ENCODE measurements at regions of chr6 and their contacts with region 1.

Region 1: DNA sequence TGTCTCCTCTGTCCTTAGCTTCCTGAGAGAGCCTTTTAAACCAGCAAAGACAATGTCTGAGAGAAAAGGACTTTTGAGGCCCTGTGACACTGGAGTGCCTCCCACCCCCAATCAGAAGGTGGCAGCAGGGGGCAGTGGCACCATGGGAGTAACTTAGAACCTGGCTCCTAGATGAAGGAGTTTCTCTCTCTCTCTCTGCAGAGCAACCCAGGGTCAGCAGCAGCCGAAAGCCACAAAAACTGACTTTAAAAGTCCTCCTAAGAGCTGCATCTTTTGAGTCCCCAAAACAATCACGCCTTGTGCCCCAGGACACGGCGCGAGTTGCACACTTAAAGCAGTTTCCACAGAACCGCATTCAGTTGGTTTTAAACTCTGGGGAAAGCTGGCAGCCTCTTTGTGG is 5.3 kb upstream of the TCP11 start:
- DNase-seq: no peak
- ATAC-seq: peak; percentile 86
- H3K4me3 ChIP-seq: no peak overlapping the region
- H3K27ac ChIP-seq: no peak overlapping the region
- H3K4me1 ChIP-seq: peaks cover 6% of the 10 kb centered on the region
- H3K27me3 ChIP-seq: no peaks in the 10 kb centered on the region
- CTCF ChIP-seq: peak; percentile 43 to 73 (median 62); a peak in 5 of 6 replicates
- EP300 ChIP-seq: no peak
- POLR2A ChIP-seq: no peak
- RAD21 ChIP-seq: peak; percentile 71

Region 2: GRCh38 chr6:35064757-35065440 is 81.6 kb before region 1 on chr6:
- CTCF ChIA-PET with region 1: no interaction called
- POLR2A ChIA-PET with region 1: no interaction called
- RAD21 ChIA-PET with region 1: no interaction called
- SMC1A ChIA-PET with region 1: no interaction called
- in situ Hi-C with region 1: no loop called
- intact Hi-C with region 1: no loop called
- DNase-seq: no peak
- ATAC-seq: no peak
- H3K4me3 ChIP-seq: no peak overlapping the region
- H3K27ac ChIP-seq: no peak overlapping the region
- H3K4me1 ChIP-seq: no peaks in the 10 kb centered on the region
- H3K27me3 ChIP-seq: no peaks in the 10 kb centered on the region
- CTCF ChIP-seq: no peak
- EP300 ChIP-seq: no peak
- POLR2A ChIP-seq: no peak
- RAD21 ChIP-seq: no peak

Region 3: GRCh38 chr6:35181308-35181932 is 35.0 kb after region 1 on chr6:
- CTCF ChIA-PET with region 1: interaction called, 5 read pairs
- POLR2A ChIA-PET with region 1: no interaction called
- RAD21 ChIA-PET with region 1: interaction called, 4 read pairs
- SMC1A ChIA-PET with region 1: interaction called, 7 read pairs
- in situ Hi-C with region 1: no loop called
- intact Hi-C with region 1: loop called (anchors 2 kb)
- DNase-seq: no peak
- ATAC-seq: no peak
- H3K4me3 ChIP-seq: no peak overlapping the region
- H3K27ac ChIP-seq: no peak overlapping the region
- H3K4me1 ChIP-seq: peaks cover 14% of the 10 kb centered on the region
- H3K27me3 ChIP-seq: no peaks in the 10 kb centered on the region
- CTCF ChIP-seq: no peak
- EP300 ChIP-seq: no peak
- POLR2A ChIP-seq: no peak
- RAD21 ChIP-seq: no peak

Region 4: GRCh38 chr6:35742797-35743196 is 596.3 kb after region 1 on chr6:
- CTCF ChIA-PET with region 1: no interaction called
- POLR2A ChIA-PET with region 1: no interaction called
- RAD21 ChIA-PET with region 1: no interaction called
- SMC1A ChIA-PET with region 1: no interaction called
- in situ Hi-C with region 1: no loop called
- intact Hi-C with region 1: no loop called
- DNase-seq: no peak
- ATAC-seq: no peak
- H3K4me3 ChIP-seq: no peak overlapping the region
- H3K27ac ChIP-seq: no peak overlapping the region
- H3K4me1 ChIP-seq: no peaks in the 10 kb centered on the region
- H3K27me3 ChIP-seq: no peaks in the 10 kb centered on the region
- CTCF ChIP-seq: no peak
- EP300 ChIP-seq: no peak
- POLR2A ChIP-seq: no peak
- RAD21 ChIP-seq: no peak

Measured in GM12878 (cell line).